ENCODE measurements at regions of chr3 and their contacts with region 1.

Region 1: GRCh38 chr3:185942907-185943759 is 5.3 kb upstream of the TRA2B start:
- DNase-seq: peak; percentile 87 to 88
- H3K4me3 ChIP-seq: no peak overlapping the region
- H3K4me3 Mint-ChIP-seq: no peak overlapping the region
- H3K27ac Mint-ChIP-seq: peak overlapping the region; percentile 13
- H3K4me1 ChIP-seq: peaks cover 15% of the 10 kb centered on the region
- H3K4me1 Mint-ChIP-seq: peaks cover 20% of the 10 kb centered on the region
- H3K27me3 ChIP-seq: no peaks in the 10 kb centered on the region
- H3K27me3 Mint-ChIP-seq: no peaks in the 10 kb centered on the region
- CTCF ChIP-seq: peak; percentile 92 to 97

Region 2: DNA sequence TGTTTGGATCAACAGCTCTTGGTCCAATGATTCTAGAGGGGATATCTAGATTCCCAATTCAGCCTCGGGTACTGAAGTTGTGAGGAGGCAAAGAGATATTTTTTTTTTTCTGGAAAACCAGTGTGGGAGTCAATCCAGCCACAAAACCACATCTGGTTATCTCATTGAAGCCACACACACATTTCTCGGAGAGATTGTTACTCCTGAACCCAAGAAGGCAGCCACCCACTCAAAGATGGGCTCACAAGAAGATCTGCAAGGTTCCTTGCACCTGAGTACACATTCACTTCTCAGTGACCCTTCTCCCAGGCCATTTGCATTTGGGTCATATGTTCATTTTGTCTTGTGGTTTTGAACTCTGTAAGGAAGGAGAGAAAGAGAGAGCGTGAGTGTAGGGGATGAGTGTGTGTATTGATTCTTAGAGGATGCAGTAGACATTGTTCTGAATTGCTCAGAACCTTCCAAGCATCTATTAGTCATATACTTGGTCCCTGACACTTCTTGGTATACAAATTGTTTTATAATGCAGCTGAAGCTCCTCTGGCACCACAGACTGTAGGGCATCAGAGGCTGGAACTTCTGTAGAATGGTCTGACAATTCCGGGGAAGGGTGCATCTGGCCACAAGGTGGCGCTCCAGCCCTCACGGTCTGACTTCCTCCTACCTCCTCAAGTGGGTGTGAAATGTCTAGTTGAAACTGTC is 34.0 kb after region 1 on chr3:
- CTCF ChIA-PET with region 1: interaction called, 10 read pairs
- POLR2A ChIA-PET with region 1: interaction called, 3 read pairs
- intact Hi-C with region 1: no loop called
- DNase-seq: peak; percentile 65 to 77
- H3K4me3 ChIP-seq: no peak overlapping the region
- H3K4me3 Mint-ChIP-seq: no peak overlapping the region
- H3K27ac Mint-ChIP-seq: no peak overlapping the region
- H3K4me1 ChIP-seq: no peaks in the 10 kb centered on the region
- H3K4me1 Mint-ChIP-seq: no peaks in the 10 kb centered on the region
- H3K27me3 ChIP-seq: no peaks in the 10 kb centered on the region
- H3K27me3 Mint-ChIP-seq: no peaks in the 10 kb centered on the region
- CTCF ChIP-seq: peak; percentile 86 to 89

Region 3: DNA sequence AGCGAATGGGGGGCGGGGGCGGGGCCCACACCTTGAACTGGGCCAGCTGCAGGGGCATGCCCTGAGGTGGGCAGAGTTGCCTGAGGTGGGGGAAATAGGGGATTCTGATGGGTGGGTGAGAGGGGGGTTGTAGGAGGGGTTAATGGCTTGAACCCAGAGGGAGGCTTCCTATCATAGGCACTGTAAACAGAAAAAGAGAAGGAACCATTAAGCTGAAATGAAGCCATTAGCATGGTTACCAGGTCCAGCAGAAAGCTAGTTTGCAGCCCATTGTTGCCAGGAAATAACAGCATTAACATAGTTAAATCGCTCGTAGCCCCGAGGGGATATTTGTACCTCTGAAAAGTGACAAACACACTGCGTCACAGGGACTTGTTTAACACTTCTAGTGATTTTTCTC is 136.8 kb after region 1 on chr3:
- CTCF ChIA-PET with region 1: no interaction called
- POLR2A ChIA-PET with region 1: no interaction called
- intact Hi-C with region 1: no loop called
- DNase-seq: no peak
- H3K4me3 ChIP-seq: no peak overlapping the region
- H3K4me3 Mint-ChIP-seq: no peak overlapping the region
- H3K27ac Mint-ChIP-seq: no peak overlapping the region
- H3K4me1 ChIP-seq: no peaks in the 10 kb centered on the region
- H3K4me1 Mint-ChIP-seq: no peaks in the 10 kb centered on the region
- H3K27me3 ChIP-seq: no peaks in the 10 kb centered on the region
- H3K27me3 Mint-ChIP-seq: no peaks in the 10 kb centered on the region
- CTCF ChIP-seq: no peak

Measured in Caco-2 (cell line).